T-cell (primary cell): ENCODE measurements at regions of chr11 and their contacts with region 1.

Region 1: GRCh38 chr11:65695456-65696241 is 16.4 kb upstream of the KAT5 start:
- DNase-seq: no peak
- ATAC-seq: no peak
- H3K4me3 ChIP-seq: no peak overlapping the region
- H3K4me3 Mint-ChIP-seq: no peak overlapping the region
- H3K27ac ChIP-seq: no peak overlapping the region
- H3K27ac Mint-ChIP-seq: no peak overlapping the region
- H3K4me1 ChIP-seq: no peaks in the 10 kb centered on the region
- H3K4me1 Mint-ChIP-seq: no peaks in the 10 kb centered on the region
- H3K27me3 ChIP-seq: no peaks in the 10 kb centered on the region
- H3K27me3 Mint-ChIP-seq: peaks cover 3% of the 10 kb centered on the region in 2 donors

Region 2: DNA sequence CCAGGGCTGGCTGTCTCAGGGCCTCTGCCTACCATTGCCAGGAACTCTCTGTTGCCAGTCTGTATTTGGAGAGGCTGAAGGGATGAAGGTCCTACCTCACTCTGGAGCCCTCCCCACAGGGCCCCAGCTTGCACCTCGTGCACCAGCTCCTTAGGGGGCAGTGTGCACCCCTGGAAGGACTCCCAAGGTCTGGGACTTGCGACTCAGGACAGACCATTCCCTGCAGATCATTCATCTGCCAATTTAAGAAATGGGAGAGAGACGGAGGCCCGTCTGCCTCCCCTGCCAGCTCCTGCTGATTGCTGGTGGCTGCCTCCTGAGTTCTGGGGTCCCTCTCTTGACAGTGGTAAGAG is 224.3 kb before region 1 on chr11:
- CTCF ChIA-PET with region 1: no interaction called
- POLR2A ChIA-PET with region 1: interaction called in 1 of 2 experiments, 10 read pairs
- DNase-seq: peak in 3 of 35 experiments; percentile 6 to 40 (median 23)
- ATAC-seq: peak in 1 of 4 experiments; percentile 11
- H3K4me3 ChIP-seq: peak overlapping the region in 1 of 2 donors; percentile 34
- H3K4me3 Mint-ChIP-seq: peak overlapping the region in 2 of 3 donors; percentile 70 to 72
- H3K27ac ChIP-seq: peak overlapping the region; percentile 95
- H3K27ac Mint-ChIP-seq: peak overlapping the region; percentile 94 to 98
- H3K4me1 ChIP-seq: peaks cover 3 to 26% of the 10 kb centered on the region in 2 experiments
- H3K4me1 Mint-ChIP-seq: peaks cover 16 to 36% (median 31%) of the 10 kb centered on the region in 3 donors
- H3K27me3 ChIP-seq: no peaks in the 10 kb centered on the region
- H3K27me3 Mint-ChIP-seq: no peaks in the 10 kb centered on the region

Region 3: GRCh38 chr11:65530157-65530496 is 165.5 kb before region 1 on chr11:
- CTCF ChIA-PET with region 1: no interaction called
- POLR2A ChIA-PET with region 1: no interaction called
- DNase-seq: peak in 9 of 35 experiments; percentile 26 to 60 (median 47)
- ATAC-seq: peak; percentile 39 to 76 (median 56)
- H3K4me3 ChIP-seq: no peak overlapping the region
- H3K4me3 Mint-ChIP-seq: no peak overlapping the region
- H3K27ac ChIP-seq: peak overlapping the region; percentile 47
- H3K27ac Mint-ChIP-seq: peak overlapping the region; percentile 74
- H3K4me1 ChIP-seq: peaks cover 15 to 36% of the 10 kb centered on the region in 2 experiments
- H3K4me1 Mint-ChIP-seq: peaks cover 23 to 35% (median 32%) of the 10 kb centered on the region in 3 donors
- H3K27me3 ChIP-seq: no peaks in the 10 kb centered on the region
- H3K27me3 Mint-ChIP-seq: no peaks in the 10 kb centered on the region

Region 4: DNA sequence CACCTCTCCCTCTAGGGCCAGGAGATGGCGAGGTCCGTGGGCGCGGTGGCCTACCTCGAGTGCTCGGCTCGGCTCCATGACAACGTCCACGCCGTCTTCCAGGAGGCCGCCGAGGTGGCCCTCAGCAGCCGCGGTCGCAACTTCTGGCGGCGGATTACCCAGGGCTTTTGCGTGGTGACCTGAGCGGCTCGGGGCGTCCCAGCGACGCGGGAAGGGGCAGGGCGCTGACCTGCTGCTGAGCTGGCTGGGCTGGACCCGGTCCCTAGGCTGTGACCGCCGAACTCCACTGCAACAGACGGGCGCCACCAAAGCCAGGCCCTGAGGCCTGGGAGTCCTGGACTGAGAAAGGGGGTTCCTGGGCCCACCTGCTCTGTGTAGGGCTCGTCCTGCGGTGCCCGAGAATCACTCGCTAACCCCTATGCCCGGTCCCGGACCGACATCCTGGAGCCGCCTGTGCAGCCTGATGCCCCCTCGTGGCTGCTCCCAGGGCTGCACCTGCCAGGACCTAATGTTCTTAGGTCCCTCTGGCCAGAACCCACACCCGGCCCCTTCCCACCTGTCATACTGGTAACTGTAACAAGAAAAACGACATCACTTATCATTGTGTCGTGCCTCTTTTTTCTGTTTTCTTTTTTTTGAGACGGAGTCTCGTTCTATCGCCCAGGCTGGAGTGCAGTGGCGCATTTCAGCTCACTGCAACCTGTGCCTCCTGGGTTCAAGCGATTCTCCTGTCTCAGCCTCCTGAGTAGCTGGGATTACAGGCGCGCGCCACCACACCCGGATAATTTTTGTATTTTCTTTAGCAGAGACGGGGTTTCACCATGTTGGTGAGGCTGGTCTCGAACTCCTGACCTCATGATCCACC is 1376.0 kb after region 1 on chr11:
- CTCF ChIA-PET with region 1: no interaction called
- POLR2A ChIA-PET with region 1: interaction called in 1 of 2 experiments, 11 read pairs
- DNase-seq: peak; percentile 11 to 79 (median 60)
- ATAC-seq: peak; percentile 85 to 92 (median 92)
- H3K4me3 ChIP-seq: peak overlapping the region; percentile 8 to 66
- H3K4me3 Mint-ChIP-seq: peak overlapping the region; percentile 44 to 58 (median 50)
- H3K27ac ChIP-seq: no peak overlapping the region
- H3K27ac Mint-ChIP-seq: no peak overlapping the region
- H3K4me1 ChIP-seq: peaks cover 0 to 9% of the 10 kb centered on the region in 2 experiments
- H3K4me1 Mint-ChIP-seq: peaks cover 3 to 6% (median 4%) of the 10 kb centered on the region in 3 donors
- H3K27me3 ChIP-seq: peaks cover 0 to 28% of the 10 kb centered on the region in 2 experiments
- H3K27me3 Mint-ChIP-seq: peaks cover 0 to 4% of the 10 kb centered on the region in 2 donors